Testis (tissue), 5 donors: ENCODE measurements at regions of chr6 and their contacts with region 1.

Region 1: GRCh38 chr6:157034436-157035230 is 257.5 kb downstream of the ARID1B start:
- DNase-seq: no peak
- H3K4me3 ChIP-seq: no peak overlapping the region
- H3K27ac ChIP-seq: no peak overlapping the region
- H3K4me1 ChIP-seq: peaks cover 10% of the 10 kb centered on the region
- H3K27me3 ChIP-seq: no peaks in the 10 kb centered on the region
- CTCF ChIP-seq: peak; percentile 37 to 47 (median 44)
- POLR2A ChIP-seq: no peak

Region 2: GRCh38 chr6:157184202-157185020 is 149.8 kb after region 1 on chr6:
- intact Hi-C with region 1: loop called (anchors 10 kb)
- DNase-seq: peak; percentile 77
- H3K4me3 ChIP-seq: no peak overlapping the region
- H3K27ac ChIP-seq: no peak overlapping the region
- H3K4me1 ChIP-seq: peaks cover 15% of the 10 kb centered on the region
- H3K27me3 ChIP-seq: no peaks in the 10 kb centered on the region
- CTCF ChIP-seq: peak; percentile 51 to 82 (median 72)
- POLR2A ChIP-seq: no peak

Region 3: DNA sequence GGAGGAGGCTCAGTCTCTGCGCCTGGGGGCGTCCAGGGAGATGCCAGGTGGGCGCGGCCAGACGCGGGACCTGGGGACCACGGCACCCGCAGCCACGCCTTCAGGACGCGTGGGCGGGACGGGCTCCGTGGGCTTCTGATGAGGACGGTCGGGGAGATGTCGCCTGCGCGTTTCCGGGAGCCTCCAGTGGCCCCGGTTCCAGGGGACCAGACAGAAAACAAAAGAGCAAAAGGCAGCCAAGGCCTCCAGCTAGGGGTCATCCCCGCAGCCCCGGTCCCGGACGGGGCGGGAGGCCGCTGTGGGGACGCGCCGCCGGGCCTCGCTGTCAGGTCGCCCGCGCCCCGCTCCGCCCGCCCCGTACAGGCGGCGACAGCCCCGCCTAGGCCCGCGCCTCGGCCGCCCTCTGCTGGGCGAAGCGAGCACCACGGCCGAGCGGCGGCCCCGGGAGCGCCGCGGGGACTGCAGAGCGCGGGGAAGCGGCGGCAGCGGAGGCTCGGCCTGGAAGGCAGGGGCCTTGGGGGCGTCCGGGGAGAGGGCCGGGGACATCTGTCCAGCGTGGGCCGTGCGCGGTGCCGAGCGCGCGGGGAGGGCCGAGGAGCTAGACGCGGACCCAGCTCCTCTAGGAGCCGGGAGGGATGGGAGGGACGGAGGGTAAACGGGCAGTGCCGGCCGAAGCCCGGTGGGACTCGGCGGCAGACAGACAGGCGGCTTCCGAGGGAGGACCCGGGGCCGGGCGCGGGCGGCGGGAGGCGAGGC is 240.0 kb after region 1 on chr6:
- intact Hi-C with region 1: loop called (anchors 10 kb)
- DNase-seq: peak; percentile 73
- H3K4me3 ChIP-seq: peak overlapping the region; percentile 60 to 65
- H3K27ac ChIP-seq: peak overlapping the region; percentile 75 to 88
- H3K4me1 ChIP-seq: peaks cover 6% of the 10 kb centered on the region
- H3K27me3 ChIP-seq: no peaks in the 10 kb centered on the region
- CTCF ChIP-seq: peak; percentile 79 to 94 (median 94)
- POLR2A ChIP-seq: no peak